Thyroid gland (tissue), 4 donors: ENCODE measurements at regions of chr15 and their contacts with region 1.

Region 1: DNA sequence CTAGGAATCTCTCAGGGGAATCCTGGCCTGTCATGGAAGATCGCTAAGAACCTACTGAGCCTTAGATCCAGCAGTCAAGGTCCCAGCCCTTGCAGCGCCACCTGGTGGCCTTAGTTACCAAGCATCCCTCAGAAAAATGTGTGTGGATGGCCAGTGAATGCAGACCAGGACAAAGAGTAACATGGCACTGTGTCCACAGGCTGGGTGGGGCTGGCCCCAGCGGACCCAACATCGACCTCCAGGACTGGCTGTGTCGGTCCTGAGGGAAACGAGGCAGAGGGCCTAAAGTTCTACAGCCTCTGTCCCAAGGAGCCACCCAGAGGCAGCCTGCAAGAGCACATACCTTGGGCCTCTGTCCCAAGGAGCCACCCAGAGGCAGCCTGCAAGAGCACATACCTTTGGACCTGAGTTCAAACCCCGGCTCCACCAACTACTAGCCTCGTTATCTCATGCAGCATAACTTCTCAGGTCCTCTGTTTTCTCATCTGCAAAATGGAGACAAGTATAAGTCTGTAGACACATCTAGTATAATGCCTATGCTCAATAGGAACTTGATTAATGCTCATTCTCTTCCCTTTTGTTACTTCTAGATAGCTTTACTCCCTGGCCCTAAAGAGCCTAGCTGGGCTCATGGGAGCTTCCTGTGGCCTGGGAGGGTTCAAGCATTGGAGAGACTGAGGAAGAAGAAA is 57.5 kb upstream of the HERC1 start:
- DNase-seq: peak; percentile 80 to 85
- H3K4me3 ChIP-seq: no peak overlapping the region
- H3K27ac ChIP-seq: no peak overlapping the region
- H3K4me1 ChIP-seq: peaks cover 0 to under 1% of the 10 kb centered on the region in 2 donors
- H3K27me3 ChIP-seq: no peaks in the 10 kb centered on the region
- CTCF ChIP-seq: peak; percentile 40 to 82 (median 72)
- POLR2A ChIP-seq: no peak

Region 2: DNA sequence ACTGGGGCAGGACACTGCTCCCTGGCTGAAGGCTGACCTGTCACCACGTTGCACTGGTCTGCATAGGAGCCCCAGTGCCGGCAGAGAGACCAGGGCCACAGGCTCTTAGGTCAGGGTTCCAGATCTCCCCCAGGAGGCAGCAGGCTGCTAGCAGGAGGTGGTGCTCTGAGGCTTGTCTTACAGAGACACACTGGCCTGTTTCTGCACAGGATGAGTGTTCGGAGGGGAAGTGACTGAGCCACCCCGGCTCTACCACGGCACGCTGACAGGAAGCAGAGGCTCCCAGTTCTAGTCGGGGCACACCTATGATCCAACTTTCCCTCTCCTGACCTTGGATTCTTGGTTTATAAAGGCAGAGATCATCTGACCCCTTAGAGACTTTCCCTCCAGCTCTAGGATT is 285.4 kb before region 1 on chr15:
- intact Hi-C with region 1: loop called (anchors 5 kb)
- DNase-seq: no peak
- H3K4me3 ChIP-seq: no peak overlapping the region
- H3K27ac ChIP-seq: no peak overlapping the region
- H3K4me1 ChIP-seq: peaks cover 6 to 22% of the 10 kb centered on the region in 2 donors
- H3K27me3 ChIP-seq: no peaks in the 10 kb centered on the region
- CTCF ChIP-seq: no peak
- POLR2A ChIP-seq: no peak

Region 3: GRCh38 chr15:63759752-63760151 is 131.5 kb before region 1 on chr15:
- intact Hi-C with region 1: loop called (anchors 5 kb)
- DNase-seq: no peak
- H3K4me3 ChIP-seq: no peak overlapping the region
- H3K27ac ChIP-seq: no peak overlapping the region
- H3K4me1 ChIP-seq: peaks cover 9 to 22% of the 10 kb centered on the region in 2 donors
- H3K27me3 ChIP-seq: no peaks in the 10 kb centered on the region
- CTCF ChIP-seq: no peak
- POLR2A ChIP-seq: no peak

Region 4: DNA sequence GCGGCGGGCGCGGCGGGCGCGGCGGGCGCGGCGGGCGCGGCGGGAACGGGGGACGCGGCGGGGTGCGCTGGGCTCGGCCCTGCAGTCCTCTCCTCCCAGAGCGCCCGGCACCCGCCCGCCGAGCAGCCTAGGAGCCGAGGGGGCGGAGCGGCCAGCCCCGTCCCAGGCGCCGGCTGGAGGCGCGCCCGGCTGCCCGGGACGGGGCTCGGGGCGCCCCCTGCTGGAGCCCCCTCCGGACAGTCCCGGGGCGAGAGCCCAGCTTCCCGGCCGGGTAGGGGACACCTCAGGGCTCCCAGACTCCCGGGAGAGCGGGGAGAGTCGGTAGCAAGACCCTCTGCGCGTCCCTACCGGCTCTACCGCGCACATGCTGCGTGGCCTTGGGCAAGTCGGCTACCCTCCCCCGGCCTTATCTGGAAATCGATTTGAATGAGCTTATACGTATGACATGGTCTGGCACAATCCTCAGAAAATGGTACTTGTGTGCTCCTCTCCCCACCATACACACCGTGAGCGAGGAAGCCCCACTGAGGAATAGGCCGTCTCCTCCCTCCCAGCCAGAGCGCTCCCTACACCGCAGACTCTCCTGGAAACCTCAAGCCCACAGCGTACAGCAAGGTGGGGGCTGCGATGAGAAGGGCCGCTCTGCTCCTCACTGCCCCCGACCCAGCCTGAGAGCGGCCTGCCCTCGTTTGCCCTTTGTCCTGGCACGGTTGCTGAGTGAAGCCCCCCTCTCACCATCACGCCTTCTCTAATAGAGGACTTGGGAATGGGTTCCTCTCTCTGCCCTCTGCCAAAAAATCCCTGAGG is 155.3 kb after region 1 on chr15 and contains the start of gene DAPK2:
- intact Hi-C with region 1: loop called (anchors 10 kb)
- DNase-seq: peak; percentile 82 to 85
- H3K4me3 ChIP-seq: peak within 1 kb of the TSS in 2 of 3 donors; percentile 25 to 60
- H3K27ac ChIP-seq: peak within 1 kb of the TSS in 2 of 3 donors; percentile 62 to 83
- H3K4me1 ChIP-seq: peaks cover 20 to 27% of the 10 kb centered on the region in 2 donors
- H3K27me3 ChIP-seq: no peaks in the 10 kb centered on the region
- CTCF ChIP-seq: peak; percentile 48 to 95 (median 78)
- POLR2A ChIP-seq: peak in 1 of 2 donors; percentile 88
- total RNA-seq, gene DAPK2: 47.4 to 105 (median 78.7) TPM